ENCODE measurements at regions of chr3 and their contacts with region 1.

Region 1: DNA sequence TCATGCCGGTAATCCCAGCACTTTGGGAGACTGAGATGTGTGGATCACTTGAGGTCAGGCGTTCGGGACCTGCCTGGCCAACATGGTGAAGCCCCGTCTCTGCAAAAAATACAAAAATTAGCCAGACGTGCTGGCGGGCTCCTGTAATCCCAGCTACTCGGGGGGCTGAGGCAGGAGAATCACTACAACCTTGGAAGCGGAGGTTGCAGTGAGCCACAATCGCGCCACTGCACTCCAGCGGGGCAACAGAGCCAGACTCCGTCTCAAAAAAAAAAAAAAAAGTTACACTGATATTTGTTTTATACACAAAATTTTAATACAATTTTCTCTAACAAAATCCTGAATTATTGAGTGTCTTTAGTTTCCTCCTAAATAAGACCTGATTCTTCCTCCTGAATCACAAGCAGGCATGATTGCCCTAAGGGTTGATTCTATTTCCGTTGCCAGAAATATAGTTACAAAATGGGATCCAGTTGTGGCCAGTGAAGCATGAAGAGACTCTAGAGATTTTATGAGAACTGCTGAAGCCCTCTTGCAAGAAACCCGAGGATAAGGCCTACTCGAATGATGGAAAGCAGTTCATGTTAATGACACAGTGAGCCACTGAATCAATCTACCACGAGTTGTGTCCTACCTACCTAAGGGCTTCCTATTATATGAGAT is 9.6 kb upstream of the SMARCC1 start:
- DNase-seq: no peak
- ATAC-seq: no peak
- H3K4me3 Mint-ChIP-seq: no peak overlapping the region
- H3K27ac Mint-ChIP-seq: no peak overlapping the region
- H3K4me1 Mint-ChIP-seq: peaks cover 2% of the 10 kb centered on the region
- H3K27me3 Mint-ChIP-seq: no peaks in the 10 kb centered on the region

Region 2: GRCh38 chr3:47522082-47522987 is 269.0 kb before region 1 on chr3:
- CTCF ChIA-PET with region 1: interaction called, 42 read pairs
- POLR2A ChIA-PET with region 1: interaction called, 3 read pairs
- DNase-seq: peak; percentile 88
- ATAC-seq: peak; percentile 93
- H3K4me3 Mint-ChIP-seq: no peak overlapping the region
- H3K27ac Mint-ChIP-seq: peak overlapping the region; percentile 14
- H3K4me1 Mint-ChIP-seq: peaks cover 14% of the 10 kb centered on the region
- H3K27me3 Mint-ChIP-seq: no peaks in the 10 kb centered on the region

Region 3: DNA sequence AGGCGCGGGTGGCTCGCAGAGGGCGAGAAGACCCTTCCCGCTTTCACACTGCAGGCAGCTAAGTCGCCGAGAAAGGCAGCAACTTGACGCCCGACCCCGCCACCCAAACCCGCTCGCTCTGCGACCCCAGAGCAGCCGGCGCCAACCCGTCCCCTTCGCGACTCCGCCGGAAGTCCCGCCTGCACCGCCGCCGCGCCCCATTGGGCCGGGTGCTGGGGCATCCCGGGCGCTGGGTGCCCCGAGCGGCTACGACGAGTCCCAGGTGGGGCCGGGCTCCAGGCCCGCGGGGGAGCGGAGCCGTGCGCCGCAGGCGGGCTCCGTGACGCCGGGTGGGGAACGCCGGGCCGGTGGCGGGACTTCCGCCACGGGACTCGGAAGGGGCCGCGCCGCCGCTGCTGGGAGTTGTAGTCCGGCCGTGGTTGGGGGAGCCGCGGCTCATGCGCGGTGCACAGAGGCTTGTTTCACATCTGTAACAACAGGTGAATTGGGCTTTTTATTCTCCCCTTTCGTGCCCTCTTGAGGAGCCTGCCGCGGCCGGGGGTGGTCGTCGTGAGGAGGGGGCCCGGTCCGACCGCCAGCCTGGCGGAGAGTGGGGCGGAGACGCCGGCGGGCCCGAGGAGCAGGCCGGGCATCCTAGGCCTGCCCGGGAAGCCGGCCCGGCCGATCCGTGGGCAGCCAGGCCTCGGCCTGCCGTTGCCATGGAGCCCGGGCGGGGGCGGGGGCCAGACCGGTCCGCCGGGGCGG is 11.6 kb after region 1 on chr3 and contains the start of gene DHX30:
- CTCF ChIA-PET with region 1: interaction called, 11 read pairs
- POLR2A ChIA-PET with region 1: no interaction called
- DNase-seq: peak; percentile 87
- ATAC-seq: peak; percentile 94
- H3K4me3 Mint-ChIP-seq: peak within 1 kb of the TSS; percentile 94
- H3K27ac Mint-ChIP-seq: peak within 1 kb of the TSS; percentile 93
- H3K4me1 Mint-ChIP-seq: peaks cover 24% of the 10 kb centered on the region
- H3K27me3 Mint-ChIP-seq: no peaks in the 10 kb centered on the region
- total RNA-seq, gene DHX30: 72.8 to 75.7 TPM

Measured in activated CD8-positive, alpha-beta T cell treated with anti-CD3 and anti-CD28 coated beads, Interleukin-2, amount 10 ng/mL, durations not matched to agents 7 days and 5 days (primary cell).